ENCODE measurements at regions of chr16 and their contacts with region 1.

Region 1: GRCh38 chr16:69720822-69721430 is 5.4 kb downstream of the NQO1 start:
- DNase-seq: no peak
- ATAC-seq: no peak
- H3K4me3 Mint-ChIP-seq: no peak overlapping the region
- H3K27ac Mint-ChIP-seq: no peak overlapping the region
- H3K4me1 Mint-ChIP-seq: peaks cover 6% of the 10 kb centered on the region
- H3K27me3 Mint-ChIP-seq: no peaks in the 10 kb centered on the region
- CTCF ChIP-seq: no peak

Region 2: DNA sequence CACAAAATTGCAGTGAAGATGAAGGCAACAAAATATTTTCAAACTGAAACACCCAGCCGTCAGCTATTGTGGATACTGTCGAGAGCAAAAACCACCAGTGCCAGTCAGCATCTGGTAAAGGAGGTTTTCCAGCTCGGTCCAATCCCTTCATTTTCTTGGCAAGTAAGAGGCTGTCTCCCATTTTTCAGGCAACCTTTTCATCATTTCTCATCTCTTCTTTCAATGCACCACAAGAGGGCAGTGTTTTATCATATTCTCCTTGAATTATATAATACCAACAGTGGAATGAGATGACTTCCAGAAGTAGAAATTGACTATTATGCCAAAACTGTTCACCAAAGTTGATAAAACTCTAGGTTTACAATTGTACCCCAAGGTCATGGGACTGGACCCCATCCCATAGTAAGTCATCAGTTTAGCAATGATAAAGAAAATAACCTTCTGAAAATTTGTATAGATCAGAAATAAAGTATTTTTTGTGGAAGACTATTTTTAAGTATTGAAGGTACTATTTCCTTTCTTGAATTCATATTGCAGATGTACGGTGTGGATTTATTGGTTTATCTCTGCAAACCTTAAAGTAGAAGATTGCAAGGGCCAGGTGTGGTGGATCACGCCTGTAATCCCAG is 11.4 kb before region 1 on chr16:
- CTCF ChIA-PET with region 1: interaction called, 28 read pairs
- POLR2A ChIA-PET with region 1: no interaction called
- intact Hi-C with region 1: no loop called
- DNase-seq: no peak
- ATAC-seq: peak; percentile 53
- H3K4me3 Mint-ChIP-seq: no peak overlapping the region
- H3K27ac Mint-ChIP-seq: peak overlapping the region; percentile 67
- H3K4me1 Mint-ChIP-seq: peaks cover 5% of the 10 kb centered on the region
- H3K27me3 Mint-ChIP-seq: no peaks in the 10 kb centered on the region
- CTCF ChIP-seq: peak; percentile 86

Region 3: DNA sequence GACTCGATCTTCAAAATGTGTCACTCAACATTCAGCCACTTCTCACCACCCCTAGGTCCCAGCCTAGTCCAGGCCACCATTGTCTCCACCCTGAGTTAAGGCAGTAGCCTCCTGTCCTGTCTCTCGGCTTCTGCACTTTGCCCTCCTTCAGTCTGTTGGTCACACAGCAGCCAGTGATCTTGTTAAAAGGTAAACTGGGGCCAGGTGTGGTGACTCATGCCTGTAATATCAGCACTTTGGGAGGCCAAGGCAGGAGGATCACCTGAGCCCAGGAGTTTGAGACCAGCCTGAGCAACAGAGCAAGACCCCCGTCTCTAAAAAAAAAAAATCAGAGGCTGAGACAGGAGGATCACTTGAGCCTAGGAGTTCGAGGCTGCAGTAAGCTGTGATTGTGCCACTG is 67.0 kb after region 1 on chr16:
- CTCF ChIA-PET with region 1: no interaction called
- POLR2A ChIA-PET with region 1: no interaction called
- intact Hi-C with region 1: no loop called
- DNase-seq: no peak
- ATAC-seq: no peak
- H3K4me3 Mint-ChIP-seq: no peak overlapping the region
- H3K27ac Mint-ChIP-seq: no peak overlapping the region
- H3K4me1 Mint-ChIP-seq: no peaks in the 10 kb centered on the region
- H3K27me3 Mint-ChIP-seq: no peaks in the 10 kb centered on the region
- CTCF ChIP-seq: no peak

Measured in activated CD8-positive, alpha-beta T cell treated with anti-CD3 and anti-CD28 coated beads for 36 hours (primary cell).